Sigmoid colon (tissue), 7 donors: ENCODE measurements at regions of chr5 and their contacts with region 1.

Region 1: DNA sequence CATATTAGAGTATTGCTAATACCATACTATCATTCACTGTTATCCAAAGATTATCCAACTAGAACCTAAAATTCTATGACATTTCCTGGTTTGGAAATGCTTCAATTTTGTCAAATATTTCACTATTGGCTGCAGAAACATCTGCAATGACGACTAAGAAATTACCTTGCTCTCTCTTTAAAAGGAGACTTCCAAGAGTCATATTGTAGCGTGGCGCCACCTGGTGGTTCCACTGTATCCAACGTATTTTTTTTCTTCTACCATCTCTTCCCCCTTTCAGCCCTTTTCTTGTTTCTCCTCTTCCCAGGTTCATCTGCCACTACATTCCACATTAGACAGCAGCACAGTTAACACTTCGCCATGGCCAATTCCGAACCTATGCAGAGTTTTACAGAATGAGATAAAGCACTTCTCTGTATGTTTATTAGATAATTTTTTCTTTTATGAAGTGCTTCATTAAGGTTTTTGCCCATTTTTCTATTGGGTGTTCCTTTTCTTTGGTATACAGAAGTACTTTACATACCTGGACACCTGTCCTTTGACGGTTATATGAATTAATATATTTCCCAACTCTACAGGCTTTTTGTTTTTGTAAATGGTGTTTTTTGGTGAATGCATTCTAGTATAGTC is 153.5 kb downstream of the CDC42SE2 start:
- DNase-seq: peak; percentile 80
- H3K4me3 ChIP-seq: no peak overlapping the region
- H3K27ac ChIP-seq: no peak overlapping the region
- H3K4me1 ChIP-seq: no peaks in the 10 kb centered on the region
- H3K27me3 ChIP-seq: no peaks in the 10 kb centered on the region
- CTCF ChIP-seq: peak; percentile 42 to 77 (median 70)
- EP300 ChIP-seq: no peak
- POLR2A ChIP-seq: no peak

Region 2: DNA sequence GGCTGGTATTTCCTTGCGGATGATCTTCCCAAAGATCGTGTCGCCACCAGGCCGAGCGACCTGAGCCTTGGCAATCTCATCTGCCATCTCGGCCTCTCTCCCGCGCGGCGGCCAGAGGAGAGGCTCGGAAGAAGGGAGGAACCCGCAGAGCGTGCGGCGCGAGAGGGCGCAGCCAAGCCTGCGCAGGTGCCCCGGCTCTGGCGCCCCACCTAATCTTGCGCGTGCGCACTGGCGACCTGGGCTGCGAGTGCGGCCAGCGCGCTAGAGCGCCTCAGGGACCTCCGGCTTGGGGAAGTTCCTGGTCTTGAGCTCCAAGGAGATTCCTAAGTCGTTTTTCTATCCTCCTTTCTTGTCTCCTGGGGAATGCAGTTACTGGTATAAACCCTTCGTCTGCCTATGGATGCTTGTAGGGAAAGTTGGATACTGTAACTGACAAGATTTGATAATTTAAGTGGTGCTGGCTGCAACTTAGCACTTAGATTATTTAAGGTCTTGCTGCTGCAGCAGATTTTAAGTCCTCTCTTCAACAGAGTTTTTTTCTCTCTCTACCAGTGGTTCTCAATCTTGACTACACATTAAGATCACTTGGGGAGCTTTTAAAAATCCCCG is 252.1 kb before region 1 on chr5 and contains the start of gene HINT1:
- intact Hi-C with region 1: loop called (anchors 2 kb)
- DNase-seq: peak; percentile 94
- H3K4me3 ChIP-seq: peak within 1 kb of the TSS; percentile 64 to 82 (median 71)
- H3K27ac ChIP-seq: peak within 1 kb of the TSS; percentile 93 to 94 (median 94)
- H3K4me1 ChIP-seq: peaks cover 0 to 30% (median 20%) of the 10 kb centered on the region in 4 donors
- H3K27me3 ChIP-seq: no peaks in the 10 kb centered on the region
- CTCF ChIP-seq: no peak
- EP300 ChIP-seq: no peak
- POLR2A ChIP-seq: peak; percentile 81 to 82
- total RNA-seq, gene HINT1: 135 to 261 (median 251) TPM

Region 3: GRCh38 chr5:131263648-131264450 is 153.5 kb before region 1 on chr5 and contains the start of gene CDC42SE2:
- intact Hi-C with region 1: loop called (anchors 10 kb)
- DNase-seq: peak; percentile 89
- H3K4me3 ChIP-seq: peak within 1 kb of the TSS; percentile 72 to 98 (median 85)
- H3K27ac ChIP-seq: peak within 1 kb of the TSS; percentile 84 to 92 (median 89)
- H3K4me1 ChIP-seq: peaks cover 0 to 24% (median 15%) of the 10 kb centered on the region in 4 donors
- H3K27me3 ChIP-seq: no peaks in the 10 kb centered on the region
- CTCF ChIP-seq: no peak
- EP300 ChIP-seq: no peak
- POLR2A ChIP-seq: peak; percentile 68 to 73
- total RNA-seq, gene CDC42SE2: 24.1 to 33.2 (median 28.6) TPM

Region 4: DNA sequence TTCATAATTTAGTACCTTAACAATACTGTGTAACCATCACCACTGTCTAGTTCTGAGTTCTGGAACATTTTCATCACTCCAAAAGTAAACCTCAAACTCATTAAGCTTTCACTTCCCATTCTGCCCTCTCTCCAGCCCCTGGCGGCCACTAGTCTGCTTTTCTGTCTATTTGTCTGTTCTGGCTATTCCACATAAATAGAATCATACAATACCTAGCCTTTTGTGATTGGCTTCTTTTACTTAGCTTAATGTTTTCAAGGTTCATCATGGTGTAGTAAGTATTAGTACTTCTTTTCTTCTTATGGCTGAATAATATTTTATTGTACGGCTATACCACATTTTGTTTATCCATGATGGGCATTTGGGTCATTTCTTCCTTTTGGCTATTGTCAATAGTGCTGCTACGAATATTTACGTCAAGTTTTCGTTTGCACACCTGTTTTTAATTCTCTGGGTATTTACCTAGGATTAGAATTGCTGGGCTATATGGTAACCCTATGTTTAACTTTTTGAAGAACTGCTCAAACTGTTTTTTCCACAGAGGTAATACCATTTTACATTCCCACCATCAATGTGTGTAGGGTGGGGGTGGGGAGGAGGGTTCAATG is 79.1 kb after region 1 on chr5:
- intact Hi-C with region 1: no loop called
- DNase-seq: no peak
- H3K4me3 ChIP-seq: no peak overlapping the region
- H3K27ac ChIP-seq: no peak overlapping the region
- H3K4me1 ChIP-seq: no peaks in the 10 kb centered on the region
- H3K27me3 ChIP-seq: no peaks in the 10 kb centered on the region
- CTCF ChIP-seq: no peak
- EP300 ChIP-seq: no peak
- POLR2A ChIP-seq: no peak